Activated CD8-positive, alpha-beta T cell treated with anti-CD3 and anti-CD28 coated beads for 36 hours (primary cell): ENCODE measurements at regions of chr1 and their contacts with region 1.

Region 1: GRCh38 chr1:157156058-157156541 is 17.9 kb upstream of the ETV3 start:
- DNase-seq: peak; percentile 86
- ATAC-seq: peak; percentile 80
- H3K4me3 Mint-ChIP-seq: no peak overlapping the region
- H3K27ac Mint-ChIP-seq: no peak overlapping the region
- H3K4me1 Mint-ChIP-seq: peaks cover 14% of the 10 kb centered on the region
- H3K27me3 Mint-ChIP-seq: peaks cover 3% of the 10 kb centered on the region
- CTCF ChIP-seq: peak; percentile 97

Region 2: DNA sequence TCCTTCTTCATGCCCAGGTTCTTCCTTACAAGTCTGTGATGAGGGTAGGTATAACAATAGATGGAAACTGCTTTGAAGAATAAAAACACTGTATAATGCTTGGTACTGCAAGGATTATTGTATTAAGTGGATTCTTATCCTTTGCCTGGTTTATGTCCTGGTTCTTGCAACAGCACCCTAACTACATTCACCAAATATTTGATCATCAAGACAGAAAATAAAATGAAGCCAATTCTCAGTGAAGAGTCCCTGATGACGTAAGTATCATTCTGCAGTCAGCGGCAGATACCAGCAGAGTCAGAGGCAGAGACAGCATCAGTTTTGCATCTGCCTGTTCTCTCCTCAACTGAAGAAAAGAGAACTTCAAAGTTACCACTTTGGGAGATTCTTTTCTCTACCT is 130.2 kb before region 1 on chr1:
- CTCF ChIA-PET with region 1: no interaction called
- POLR2A ChIA-PET with region 1: no interaction called
- intact Hi-C with region 1: no loop called
- DNase-seq: no peak
- ATAC-seq: no peak
- H3K4me3 Mint-ChIP-seq: no peak overlapping the region
- H3K27ac Mint-ChIP-seq: no peak overlapping the region
- H3K4me1 Mint-ChIP-seq: no peaks in the 10 kb centered on the region
- H3K27me3 Mint-ChIP-seq: peaks cover 14% of the 10 kb centered on the region
- CTCF ChIP-seq: no peak

Region 3: DNA sequence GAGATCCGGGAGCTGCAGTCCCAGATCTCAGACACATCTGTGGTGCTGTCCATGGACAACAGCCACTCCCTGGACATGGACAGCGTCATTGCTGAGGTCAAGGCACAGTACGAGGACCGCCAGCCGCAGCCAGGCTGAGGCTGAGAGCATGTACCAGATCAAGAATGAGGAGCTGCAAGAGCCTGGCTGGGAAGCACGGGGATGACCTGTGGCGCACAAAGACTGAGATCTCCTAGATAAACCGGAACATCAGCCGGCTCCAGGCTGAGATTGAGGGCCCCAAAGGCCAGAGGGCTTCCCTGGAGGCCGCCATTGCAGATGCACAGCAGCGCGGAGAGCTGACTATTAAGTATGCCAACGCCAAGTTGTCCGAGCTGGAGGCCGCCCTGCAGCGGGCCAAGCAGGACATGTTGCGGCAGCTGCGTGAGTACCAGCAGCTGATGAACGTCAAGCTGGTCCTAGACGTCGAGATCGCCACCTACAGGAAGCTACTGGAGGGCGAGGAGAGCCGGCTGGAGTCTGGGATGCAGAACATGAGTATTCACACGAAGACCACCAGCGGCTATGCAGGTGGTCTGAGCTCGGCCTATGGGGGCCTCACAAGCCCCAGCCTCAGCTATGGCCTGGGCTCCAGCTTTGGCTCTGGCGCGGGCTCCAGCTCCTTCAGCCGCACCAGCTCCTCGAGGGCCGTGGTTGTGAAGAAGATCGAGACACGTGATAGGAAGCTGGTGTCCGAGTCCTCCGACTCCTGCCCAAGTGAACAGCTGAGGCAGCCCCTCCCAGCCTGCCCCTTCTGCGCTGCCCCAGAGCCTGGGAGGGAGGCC is 81.9 kb before region 1 on chr1:
- CTCF ChIA-PET with region 1: interaction called, 562 read pairs
- POLR2A ChIA-PET with region 1: no interaction called
- intact Hi-C with region 1: no loop called
- DNase-seq: peak; percentile 75
- ATAC-seq: no peak
- H3K4me3 Mint-ChIP-seq: no peak overlapping the region
- H3K27ac Mint-ChIP-seq: no peak overlapping the region
- H3K4me1 Mint-ChIP-seq: no peaks in the 10 kb centered on the region
- H3K27me3 Mint-ChIP-seq: peaks cover 19% of the 10 kb centered on the region
- CTCF ChIP-seq: peak; percentile 53

Region 4: DNA sequence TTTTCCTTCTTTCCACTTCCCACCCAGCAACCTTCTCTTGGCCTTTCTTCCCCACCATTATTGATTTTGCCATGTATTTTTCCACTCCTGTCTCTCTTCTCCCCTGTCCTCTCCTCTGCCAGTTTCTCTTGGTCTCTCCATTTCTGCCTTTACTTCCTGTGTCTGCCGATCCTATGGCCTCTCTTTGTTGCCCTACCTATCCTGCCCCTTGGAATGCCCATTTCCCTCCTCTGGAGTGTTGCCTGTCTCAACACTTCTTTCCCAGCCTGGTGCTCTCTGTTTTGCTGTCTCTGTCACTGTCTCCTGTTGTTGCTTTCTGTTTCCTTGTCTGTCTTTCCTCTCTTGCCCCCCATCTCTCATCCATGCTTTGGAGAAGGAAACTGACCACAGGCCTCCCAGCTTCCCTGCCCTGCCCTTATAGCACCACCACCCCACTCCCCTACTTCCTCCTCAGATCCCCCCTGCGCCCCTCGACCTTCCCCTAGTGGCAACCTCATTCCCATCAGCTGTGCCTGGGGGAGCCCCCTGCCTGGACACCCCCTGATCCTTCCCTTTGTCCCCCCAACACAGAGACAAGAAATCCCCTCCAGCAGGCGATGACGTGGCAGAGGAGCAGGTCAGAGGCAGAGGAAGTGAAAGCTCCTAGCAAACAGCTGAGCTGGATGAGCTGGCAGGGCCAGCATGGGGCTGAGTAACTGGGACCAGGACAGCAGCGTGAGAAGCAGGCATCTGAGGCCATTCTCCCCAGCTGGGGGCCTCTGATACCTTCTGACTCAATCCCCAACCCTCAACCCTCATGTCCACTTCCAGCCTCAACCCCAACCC is 49.9 kb before region 1 on chr1:
- CTCF ChIA-PET with region 1: interaction called, 20 read pairs
- POLR2A ChIA-PET with region 1: interaction called, 3 read pairs
- intact Hi-C with region 1: no loop called
- DNase-seq: peak; percentile 72
- ATAC-seq: peak; percentile 93
- H3K4me3 Mint-ChIP-seq: no peak overlapping the region
- H3K27ac Mint-ChIP-seq: peak overlapping the region; percentile 2
- H3K4me1 Mint-ChIP-seq: peaks cover 9% of the 10 kb centered on the region
- H3K27me3 Mint-ChIP-seq: peaks cover 19% of the 10 kb centered on the region
- CTCF ChIP-seq: no peak

Region 5: GRCh38 chr1:157117527-157118057 is 38.5 kb before region 1 on chr1:
- CTCF ChIA-PET with region 1: interaction called, 15 read pairs
- POLR2A ChIA-PET with region 1: no interaction called
- intact Hi-C with region 1: no loop called
- DNase-seq: no peak
- ATAC-seq: no peak
- H3K4me3 Mint-ChIP-seq: no peak overlapping the region
- H3K27ac Mint-ChIP-seq: no peak overlapping the region
- H3K4me1 Mint-ChIP-seq: no peaks in the 10 kb centered on the region
- H3K27me3 Mint-ChIP-seq: no peaks in the 10 kb centered on the region
- CTCF ChIP-seq: no peak

Region 6: DNA sequence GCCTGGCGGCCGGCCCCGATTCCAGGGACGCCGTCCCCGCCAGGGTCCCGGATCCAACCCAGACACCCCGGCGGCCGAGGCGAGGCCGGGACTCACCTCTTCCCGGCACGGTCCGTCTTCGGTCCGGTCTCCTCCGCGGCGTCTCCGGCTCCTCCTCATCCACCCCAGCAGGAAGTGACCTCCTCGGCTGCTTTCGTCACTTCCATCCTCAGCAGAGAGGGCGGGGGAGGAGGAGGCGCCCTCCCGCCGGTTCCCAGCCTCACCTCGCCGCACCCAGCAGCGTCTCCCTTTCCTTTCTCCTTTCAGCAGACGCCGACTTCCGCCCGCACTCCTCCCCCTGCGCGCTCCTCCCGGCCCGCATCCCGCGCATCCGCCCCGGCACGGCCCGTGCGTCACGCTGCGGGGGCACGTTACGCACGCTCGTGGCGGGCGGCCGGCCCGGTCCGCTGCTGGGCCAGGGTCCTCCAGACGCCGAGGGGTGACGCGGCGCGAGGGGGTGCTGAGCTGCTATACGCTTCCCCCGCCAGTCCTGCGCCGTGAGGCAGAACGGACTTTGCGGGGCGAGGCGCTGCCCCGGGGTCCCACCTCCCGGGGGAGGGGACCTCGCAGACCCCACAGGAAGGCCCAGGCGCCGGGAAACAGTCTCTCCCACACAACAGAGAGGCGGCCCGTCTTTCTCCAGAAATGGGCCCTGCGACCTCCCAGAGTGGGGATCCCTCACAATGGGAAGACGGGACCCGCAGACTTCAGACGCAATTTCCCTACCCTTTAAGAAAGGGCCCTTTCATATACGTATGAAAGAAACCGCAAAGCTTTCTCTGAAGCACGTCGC is 17.7 kb before region 1 on chr1 and contains the start of gene ETV3:
- CTCF ChIA-PET with region 1: interaction called, 99 read pairs
- POLR2A ChIA-PET with region 1: interaction called, 4 read pairs
- intact Hi-C with region 1: no loop called
- DNase-seq: peak; percentile 92
- ATAC-seq: peak; percentile 83
- H3K4me3 Mint-ChIP-seq: peak within 1 kb of the TSS; percentile 95
- H3K27ac Mint-ChIP-seq: peak within 1 kb of the TSS; percentile 90
- H3K4me1 Mint-ChIP-seq: peaks cover 65% of the 10 kb centered on the region
- H3K27me3 Mint-ChIP-seq: no peaks in the 10 kb centered on the region
- CTCF ChIP-seq: no peak
- total RNA-seq, gene ETV3: 47.7 to 47.9 TPM

Region 7: GRCh38 chr1:157170677-157171515 is 14.8 kb after region 1 on chr1:
- CTCF ChIA-PET with region 1: interaction called, 13 read pairs
- POLR2A ChIA-PET with region 1: no interaction called
- intact Hi-C with region 1: no loop called
- DNase-seq: peak; percentile 75
- ATAC-seq: no peak
- H3K4me3 Mint-ChIP-seq: no peak overlapping the region
- H3K27ac Mint-ChIP-seq: no peak overlapping the region
- H3K4me1 Mint-ChIP-seq: no peaks in the 10 kb centered on the region
- H3K27me3 Mint-ChIP-seq: peaks cover 6% of the 10 kb centered on the region
- CTCF ChIP-seq: peak; percentile 60

Region 8: GRCh38 chr1:157240495-157241184 is 84.5 kb after region 1 on chr1:
- CTCF ChIA-PET with region 1: no interaction called
- POLR2A ChIA-PET with region 1: no interaction called
- intact Hi-C with region 1: no loop called
- DNase-seq: no peak
- ATAC-seq: no peak
- H3K4me3 Mint-ChIP-seq: no peak overlapping the region
- H3K27ac Mint-ChIP-seq: no peak overlapping the region
- H3K4me1 Mint-ChIP-seq: no peaks in the 10 kb centered on the region
- H3K27me3 Mint-ChIP-seq: peaks cover 12% of the 10 kb centered on the region
- CTCF ChIP-seq: no peak

Region 9: GRCh38 chr1:157315544-157315943 is 159.4 kb after region 1 on chr1:
- CTCF ChIA-PET with region 1: no interaction called
- POLR2A ChIA-PET with region 1: no interaction called
- intact Hi-C with region 1: no loop called
- DNase-seq: no peak
- ATAC-seq: no peak
- H3K4me3 Mint-ChIP-seq: no peak overlapping the region
- H3K27ac Mint-ChIP-seq: no peak overlapping the region
- H3K4me1 Mint-ChIP-seq: no peaks in the 10 kb centered on the region
- H3K27me3 Mint-ChIP-seq: peaks cover 10% of the 10 kb centered on the region
- CTCF ChIP-seq: no peak